ENCODE measurements at regions of chr19 and their contacts with region 1.

Region 1: DNA sequence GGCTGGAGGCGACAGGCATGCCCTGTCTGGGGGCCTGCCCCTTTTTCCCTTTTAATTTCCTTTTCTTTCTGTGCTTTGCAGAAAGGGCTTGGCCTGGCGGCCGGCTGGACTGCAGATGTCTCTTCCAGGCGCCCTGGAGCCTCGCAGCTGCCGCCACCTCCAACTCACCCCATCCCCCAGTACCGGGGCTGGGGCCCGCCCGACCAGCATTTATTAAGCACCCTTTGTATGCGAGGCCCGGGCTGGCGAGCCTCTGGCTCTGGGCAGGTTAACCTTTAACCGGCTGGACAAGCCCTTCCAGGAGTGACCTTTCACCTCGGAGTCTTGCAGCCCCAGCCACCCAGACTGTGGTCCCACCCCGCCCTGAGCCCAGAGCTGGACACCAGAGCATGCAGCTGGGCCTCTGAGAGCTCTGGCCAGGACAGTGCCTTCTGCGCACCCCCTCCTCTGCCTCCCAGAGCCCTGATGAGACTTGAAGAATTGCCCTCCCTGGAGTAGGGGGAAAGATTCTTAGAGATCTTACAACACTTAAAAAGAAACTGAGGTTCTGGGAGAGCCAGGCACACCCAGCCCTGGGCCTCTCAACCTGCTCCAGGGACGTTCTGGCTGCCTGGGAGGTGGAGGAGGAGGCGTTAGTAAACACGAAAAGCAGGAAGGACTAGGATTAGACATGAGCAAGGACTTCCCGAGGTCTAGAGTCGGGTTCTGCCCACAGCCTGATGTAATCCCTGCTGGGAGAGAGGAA is 1.1 kb upstream of the NR2F6 start:
- DNase-seq: no peak
- ATAC-seq: peak; percentile 40

Region 2: DNA sequence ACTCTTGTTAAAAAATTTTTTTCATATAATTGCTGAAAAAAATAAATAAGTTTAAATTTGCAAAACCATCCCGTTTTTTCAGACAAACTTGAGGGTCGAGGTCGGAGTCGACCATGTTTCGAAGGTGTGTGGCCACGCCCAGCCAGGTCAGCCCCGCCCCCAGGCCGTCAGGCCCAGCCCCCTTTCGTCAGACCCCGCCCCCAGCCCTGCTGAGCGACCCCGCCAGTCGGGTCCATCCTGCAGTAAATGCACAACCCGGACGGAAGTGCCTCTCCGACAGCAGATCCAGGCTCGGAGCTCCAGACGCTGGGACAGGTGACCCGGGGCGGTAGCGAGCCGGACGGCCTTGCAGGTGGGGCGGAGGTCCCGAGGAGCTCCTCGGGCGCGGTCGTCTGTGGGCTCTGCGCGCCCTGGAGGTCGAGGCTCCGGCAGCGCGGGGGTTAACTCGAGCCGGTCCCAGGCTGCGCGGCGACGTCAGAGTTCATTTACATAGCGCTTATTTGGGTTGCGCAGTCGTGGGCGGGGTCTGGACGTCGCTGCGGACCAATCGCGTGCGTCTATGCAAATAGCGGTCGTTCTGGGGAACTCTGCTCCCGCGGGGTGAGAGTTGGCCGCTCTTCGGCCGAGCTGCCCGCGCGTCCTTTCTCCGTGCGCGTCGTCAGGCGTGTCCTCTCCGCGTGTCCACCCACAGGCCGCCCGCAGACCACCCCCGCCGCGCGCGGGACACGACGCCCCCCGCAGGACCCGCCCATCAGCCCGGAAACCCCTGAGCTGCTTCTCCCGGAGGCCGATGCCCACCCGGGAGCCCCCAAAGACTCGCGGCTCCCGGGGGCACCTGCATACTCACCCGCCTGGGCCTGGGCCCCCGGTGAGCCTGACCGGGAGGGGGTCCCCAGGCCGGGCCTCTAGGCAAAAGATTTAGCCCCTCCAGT is 20.6 kb before region 1 on chr19 and contains the start of gene OCEL1:
- intact Hi-C with region 1: loop called (anchors 1 kb)
- DNase-seq: peak; percentile 100
- ATAC-seq: peak; percentile 98
- total RNA-seq, gene OCEL1: 26.0 TPM

Region 3: GRCh38 chr19:17260842-17261325 is 14.0 kb after region 1 on chr19:
- intact Hi-C with region 1: loop called (anchors 2 kb)
- DNase-seq: peak; percentile 91
- ATAC-seq: peak; percentile 89

Measured in Right ventricle myocardium inferior (tissue), 1 donor.